ENCODE measurements at regions of chr17 and their contacts with region 1.

Region 1: DNA sequence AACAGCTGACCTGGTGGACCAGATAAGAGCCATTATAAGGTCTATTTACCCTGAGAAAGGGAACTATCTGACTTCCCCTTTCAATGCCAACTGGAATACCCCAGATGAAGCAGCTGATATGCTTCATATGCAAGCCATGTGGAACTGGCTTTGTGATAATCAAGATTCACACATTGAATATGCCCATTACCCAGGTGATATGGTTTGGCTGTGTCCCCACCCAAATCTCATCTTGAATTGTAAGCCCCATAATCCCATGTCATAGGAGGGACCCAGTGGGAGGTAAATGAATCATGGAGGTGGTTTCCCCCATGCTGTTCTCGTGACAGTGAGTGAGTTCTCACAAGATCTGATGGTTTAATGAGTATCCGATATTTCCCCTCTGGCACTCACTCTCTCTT is 42.1 kb downstream of the IKZF3 start:
- DNase-seq: peak in 2 of 14 experiments; percentile 33 to 55
- ATAC-seq: no peak
- H3K4me3 ChIP-seq: no peak overlapping the region
- H3K4me3 Mint-ChIP-seq: no peak overlapping the region
- H3K27ac ChIP-seq: peak overlapping the region in 1 of 2 donors; percentile 26
- H3K27ac Mint-ChIP-seq: peak overlapping the region; percentile 94
- H3K4me1 ChIP-seq: peaks cover 35% of the 10 kb centered on the region
- H3K4me1 Mint-ChIP-seq: peaks cover 58% of the 10 kb centered on the region
- H3K27me3 ChIP-seq: no peaks in the 10 kb centered on the region
- H3K27me3 Mint-ChIP-seq: no peaks in the 10 kb centered on the region
- CTCF ChIP-seq: no peak

Region 2: GRCh38 chr17:39632153-39632941 is 189.7 kb before region 1 on chr17:
- CTCF ChIA-PET with region 1: no interaction called
- POLR2A ChIA-PET with region 1: no interaction called
- intact Hi-C with region 1: no loop called
- DNase-seq: no peak
- ATAC-seq: no peak
- H3K4me3 ChIP-seq: no peak overlapping the region
- H3K4me3 Mint-ChIP-seq: no peak overlapping the region
- H3K27ac ChIP-seq: no peak overlapping the region
- H3K27ac Mint-ChIP-seq: no peak overlapping the region
- H3K4me1 ChIP-seq: peaks cover 36% of the 10 kb centered on the region
- H3K4me1 Mint-ChIP-seq: peaks cover 36% of the 10 kb centered on the region
- H3K27me3 ChIP-seq: peaks cover 9 to 21% of the 10 kb centered on the region in 2 experiments
- H3K27me3 Mint-ChIP-seq: peaks cover 24% of the 10 kb centered on the region
- CTCF ChIP-seq: no peak

Region 3: GRCh38 chr17:39716879-39717536 is 105.0 kb before region 1 on chr17:
- CTCF ChIA-PET with region 1: no interaction called
- POLR2A ChIA-PET with region 1: no interaction called
- intact Hi-C with region 1: no loop called
- DNase-seq: no peak
- ATAC-seq: no peak
- H3K4me3 ChIP-seq: no peak overlapping the region
- H3K4me3 Mint-ChIP-seq: no peak overlapping the region
- H3K27ac ChIP-seq: no peak overlapping the region
- H3K27ac Mint-ChIP-seq: no peak overlapping the region
- H3K4me1 ChIP-seq: no peaks in the 10 kb centered on the region
- H3K4me1 Mint-ChIP-seq: no peaks in the 10 kb centered on the region
- H3K27me3 ChIP-seq: no peaks in the 10 kb centered on the region
- H3K27me3 Mint-ChIP-seq: no peaks in the 10 kb centered on the region
- CTCF ChIP-seq: no peak

Region 4: DNA sequence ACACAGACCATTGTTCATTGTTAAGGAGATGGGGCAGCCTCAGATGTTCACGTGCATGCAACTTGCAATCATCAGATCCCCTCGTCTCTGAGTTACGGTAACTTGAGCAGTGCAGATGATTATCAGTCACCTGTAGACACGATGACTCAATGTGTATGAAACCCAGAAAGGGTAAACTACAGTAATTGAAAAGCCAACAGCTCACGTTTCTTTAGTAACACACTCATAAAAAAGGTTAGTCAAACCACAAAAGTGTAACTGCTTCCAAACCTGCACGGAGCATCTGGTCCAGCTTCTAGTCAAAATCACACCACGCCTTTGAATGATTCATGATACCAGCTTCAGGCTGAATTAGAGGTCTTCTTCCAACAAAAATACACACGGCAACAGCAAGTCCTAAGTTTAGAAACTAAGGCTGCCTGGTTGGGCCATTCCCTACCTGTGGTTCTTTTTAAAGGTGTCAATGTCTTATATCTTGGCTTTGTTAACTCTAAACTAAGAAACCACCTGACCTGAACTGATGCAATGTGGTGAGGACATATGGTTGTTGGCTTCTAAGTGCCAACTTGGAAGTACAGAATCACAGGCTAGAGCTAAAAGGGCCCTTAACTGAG is 52.0 kb before region 1 on chr17:
- CTCF ChIA-PET with region 1: interaction called, 3 read pairs
- POLR2A ChIA-PET with region 1: interaction called, 11 read pairs
- intact Hi-C with region 1: loop called (anchors 1 to 5 kb)
- DNase-seq: peak; percentile 23 to 87 (median 55)
- ATAC-seq: peak; percentile 83
- H3K4me3 ChIP-seq: peak overlapping the region; percentile 6
- H3K4me3 Mint-ChIP-seq: peak overlapping the region; percentile 8
- H3K27ac ChIP-seq: peak overlapping the region; percentile 66 to 87
- H3K27ac Mint-ChIP-seq: peak overlapping the region; percentile 84
- H3K4me1 ChIP-seq: peaks cover 82% of the 10 kb centered on the region
- H3K4me1 Mint-ChIP-seq: peaks cover 100% of the 10 kb centered on the region
- H3K27me3 ChIP-seq: no peaks in the 10 kb centered on the region
- H3K27me3 Mint-ChIP-seq: no peaks in the 10 kb centered on the region
- CTCF ChIP-seq: no peak

Region 5: DNA sequence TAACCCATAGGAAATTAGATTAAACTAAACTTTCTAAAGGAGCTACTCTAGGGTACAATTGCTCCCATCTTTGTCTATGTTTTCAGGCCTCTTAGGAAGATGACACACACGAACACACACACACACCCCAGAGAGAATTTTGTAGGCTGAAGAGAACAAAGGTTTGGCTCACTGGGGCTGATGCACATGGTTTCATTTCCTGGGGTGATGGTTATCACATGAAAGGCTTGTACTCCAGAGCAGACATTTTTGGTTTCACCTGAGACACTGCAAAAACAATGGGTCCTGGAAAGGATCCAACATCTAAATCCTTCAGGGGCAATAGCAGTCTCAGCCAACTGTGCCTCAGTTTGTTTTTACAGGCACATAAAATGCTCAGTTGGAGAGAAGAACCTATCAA is 21.5 kb before region 1 on chr17:
- CTCF ChIA-PET with region 1: interaction called, 4 read pairs
- POLR2A ChIA-PET with region 1: interaction called, 54 read pairs
- intact Hi-C with region 1: loop called (anchors 1 to 2 kb)
- DNase-seq: peak in 13 of 14 experiments; percentile 37 to 88 (median 51)
- ATAC-seq: peak; percentile 98
- H3K4me3 ChIP-seq: no peak overlapping the region
- H3K4me3 Mint-ChIP-seq: peak overlapping the region; percentile 39
- H3K27ac ChIP-seq: peak overlapping the region; percentile 24 to 58
- H3K27ac Mint-ChIP-seq: peak overlapping the region; percentile 92
- H3K4me1 ChIP-seq: peaks cover 33% of the 10 kb centered on the region
- H3K4me1 Mint-ChIP-seq: peaks cover 65% of the 10 kb centered on the region
- H3K27me3 ChIP-seq: no peaks in the 10 kb centered on the region
- H3K27me3 Mint-ChIP-seq: no peaks in the 10 kb centered on the region
- CTCF ChIP-seq: no peak

Region 6: DNA sequence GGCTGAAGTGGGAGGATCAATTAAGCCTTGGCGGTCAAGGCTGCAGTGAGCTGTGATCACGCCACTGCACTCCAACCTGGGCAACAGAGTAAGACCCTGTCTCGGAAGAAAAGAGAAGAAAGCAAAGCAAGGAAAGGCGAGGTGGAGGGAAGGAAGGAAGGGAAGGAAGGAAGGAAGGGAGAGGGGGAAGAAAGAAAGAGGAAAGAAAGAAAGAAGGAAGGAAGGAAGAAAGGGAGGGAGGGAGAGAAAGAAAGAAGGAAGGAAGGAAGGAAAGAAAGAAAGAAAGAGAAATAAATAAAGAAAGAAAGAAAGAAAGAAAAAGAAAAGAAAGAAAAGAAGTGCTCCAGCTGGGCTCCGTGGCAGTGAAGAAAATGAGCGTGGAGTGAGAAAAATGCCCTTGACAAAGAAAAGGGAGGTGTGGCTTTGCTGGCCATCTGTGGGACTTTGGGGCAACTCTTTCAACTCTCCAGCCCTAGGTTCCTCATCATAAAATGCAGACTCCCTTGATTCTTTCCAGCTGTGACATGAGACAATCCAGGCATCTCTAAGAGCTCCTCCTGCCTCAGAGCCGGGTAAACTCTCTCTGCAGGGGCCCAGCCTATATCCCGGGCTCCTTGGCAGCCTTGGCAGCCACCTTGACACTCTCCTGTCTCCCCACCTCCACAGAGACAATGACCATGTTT is 143.1 kb after region 1 on chr17:
- CTCF ChIA-PET with region 1: no interaction called
- POLR2A ChIA-PET with region 1: no interaction called
- intact Hi-C with region 1: no loop called
- DNase-seq: no peak
- ATAC-seq: no peak
- H3K4me3 ChIP-seq: no peak overlapping the region
- H3K4me3 Mint-ChIP-seq: no peak overlapping the region
- H3K27ac ChIP-seq: no peak overlapping the region
- H3K27ac Mint-ChIP-seq: no peak overlapping the region
- H3K4me1 ChIP-seq: peaks cover 33% of the 10 kb centered on the region
- H3K4me1 Mint-ChIP-seq: peaks cover 33% of the 10 kb centered on the region
- H3K27me3 ChIP-seq: no peaks in the 10 kb centered on the region
- H3K27me3 Mint-ChIP-seq: peaks cover 10% of the 10 kb centered on the region
- CTCF ChIP-seq: no peak

Region 7: GRCh38 chr17:40005520-40005919 is 183.5 kb after region 1 on chr17:
- CTCF ChIA-PET with region 1: no interaction called
- POLR2A ChIA-PET with region 1: no interaction called
- intact Hi-C with region 1: no loop called
- DNase-seq: no peak
- ATAC-seq: no peak
- H3K4me3 ChIP-seq: no peak overlapping the region
- H3K4me3 Mint-ChIP-seq: no peak overlapping the region
- H3K27ac ChIP-seq: no peak overlapping the region
- H3K27ac Mint-ChIP-seq: no peak overlapping the region
- H3K4me1 ChIP-seq: peaks cover 7% of the 10 kb centered on the region
- H3K4me1 Mint-ChIP-seq: peaks cover 8% of the 10 kb centered on the region
- H3K27me3 ChIP-seq: no peaks in the 10 kb centered on the region
- H3K27me3 Mint-ChIP-seq: no peaks in the 10 kb centered on the region
- CTCF ChIP-seq: no peak

Measured in CD4-positive, alpha-beta T cell (primary cell).